ENCODE measurements at regions of chr17 and their contacts with region 1.

Region 1: GRCh38 chr17:30104575-30105339 is 11.9 kb upstream of the NSRP1 start:
- DNase-seq: peak; percentile 73 to 88 (median 80)
- ATAC-seq: peak; percentile 91
- H3K4me3 ChIP-seq: no peak overlapping the region
- H3K27ac ChIP-seq: peak overlapping the region in 1 of 4 donors; percentile 58
- H3K4me1 ChIP-seq: no peaks in the 10 kb centered on the region
- H3K27me3 ChIP-seq: no peaks in the 10 kb centered on the region
- CTCF ChIP-seq: peak; percentile 70 to 89 (median 79)
- POLR2A ChIP-seq: peak in 1 of 3 donors; percentile 11

Region 2: DNA sequence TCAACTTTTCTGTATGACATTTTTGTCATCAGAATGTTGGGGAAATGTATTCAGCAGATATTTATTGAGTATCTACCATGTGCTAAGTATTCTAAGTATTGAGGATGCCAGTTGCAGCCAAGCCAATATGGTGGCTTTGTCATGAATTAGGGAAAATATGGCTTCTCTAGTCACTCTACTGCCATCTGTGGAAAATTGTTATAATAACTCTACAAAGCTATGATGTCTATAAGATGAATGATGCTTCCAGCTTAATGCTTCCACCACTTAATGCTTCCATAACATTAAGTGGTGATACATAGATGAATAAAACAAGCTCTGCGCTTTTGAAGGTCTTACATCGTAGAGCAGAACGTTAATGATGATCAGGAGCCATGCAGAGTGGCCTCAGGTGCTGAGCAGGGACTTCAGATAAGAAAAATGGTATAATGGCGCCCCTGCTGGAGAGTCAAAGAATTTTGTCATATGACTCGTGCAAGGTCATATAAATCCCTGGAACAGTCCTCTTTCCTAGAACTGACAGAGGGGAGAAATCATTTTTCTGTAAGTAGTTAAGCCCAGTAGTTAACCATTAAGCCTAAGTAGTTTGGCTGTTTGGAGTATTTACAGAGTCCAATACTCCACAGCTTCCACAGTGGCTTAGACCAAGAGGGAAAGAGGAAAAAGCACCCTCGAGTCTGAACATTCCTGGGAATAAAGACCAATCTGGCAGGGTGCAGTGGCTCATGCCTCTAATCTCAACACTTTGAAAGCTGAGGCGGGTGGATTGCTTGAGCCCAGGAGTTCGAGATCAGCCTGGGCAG is 231.8 kb after region 1 on chr17:
- intact Hi-C with region 1: loop called (anchors 10 kb)
- DNase-seq: peak; percentile 64 to 80 (median 74)
- ATAC-seq: peak; percentile 85
- H3K4me3 ChIP-seq: no peak overlapping the region
- H3K27ac ChIP-seq: peak overlapping the region in 3 of 4 donors; percentile 11 to 71 (median 44)
- H3K4me1 ChIP-seq: peaks cover 33% of the 10 kb centered on the region
- H3K27me3 ChIP-seq: no peaks in the 10 kb centered on the region
- CTCF ChIP-seq: peak in 6 of 7 experiments; percentile 47 to 79 (median 76)
- POLR2A ChIP-seq: peak in 1 of 3 donors; percentile 7